Prostate gland (tissue), 2 donors: ENCODE measurements at regions of chrX and their contacts with region 1.

Region 1: GRCh38 chrX:9341291-9342201 is 123.3 kb upstream of the TBL1X start:
- DNase-seq: no peak
- H3K4me3 ChIP-seq: no peak overlapping the region
- H3K27ac ChIP-seq: peak overlapping the region; percentile 58 to 66
- H3K4me1 ChIP-seq: no peaks in the 10 kb centered on the region
- H3K27me3 ChIP-seq: no peaks in the 10 kb centered on the region
- CTCF ChIP-seq: no peak
- POLR2A ChIP-seq: no peak

Region 2: DNA sequence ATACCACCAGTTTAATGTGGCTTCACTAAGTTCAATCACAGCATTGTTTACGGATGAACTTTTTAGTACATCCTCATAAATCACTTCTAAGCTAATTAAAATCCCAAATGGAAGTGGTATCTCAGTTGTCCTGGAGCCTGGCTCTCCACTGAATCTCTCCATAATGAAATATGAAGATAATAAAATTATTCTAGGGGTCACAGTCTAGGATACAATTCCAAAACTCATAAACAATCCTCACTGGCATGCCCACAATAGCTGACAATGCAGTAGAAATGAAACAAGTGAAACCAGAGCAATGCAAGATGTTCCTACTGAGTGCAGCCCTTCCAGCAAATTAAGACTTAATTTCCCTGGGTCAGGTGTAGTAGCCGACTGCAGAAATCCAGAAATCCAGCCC is 260.3 kb before region 1 on chrX:
- intact Hi-C with region 1: loop called (anchors 5 kb)
- DNase-seq: no peak
- H3K4me3 ChIP-seq: no peak overlapping the region
- H3K27ac ChIP-seq: no peak overlapping the region
- H3K4me1 ChIP-seq: no peaks in the 10 kb centered on the region
- H3K27me3 ChIP-seq: no peaks in the 10 kb centered on the region
- CTCF ChIP-seq: no peak
- POLR2A ChIP-seq: no peak

Region 3: GRCh38 chrX:9148621-9149385 is 192.7 kb before region 1 on chrX:
- intact Hi-C with region 1: loop called (anchors 2 kb)
- DNase-seq: no peak
- H3K4me3 ChIP-seq: no peak overlapping the region
- H3K27ac ChIP-seq: no peak overlapping the region
- H3K4me1 ChIP-seq: no peaks in the 10 kb centered on the region
- H3K27me3 ChIP-seq: no peaks in the 10 kb centered on the region
- CTCF ChIP-seq: no peak
- POLR2A ChIP-seq: no peak

Region 4: GRCh38 chrX:9464435-9465371 is 123.2 kb after region 1 on chrX and contains the start of gene TBL1X:
- intact Hi-C with region 1: loop called (anchors 2 kb)
- DNase-seq: peak; percentile 31
- H3K4me3 ChIP-seq: peak within 1 kb of the TSS; percentile 51 to 53
- H3K27ac ChIP-seq: peak within 1 kb of the TSS; percentile 81 to 82
- H3K4me1 ChIP-seq: no peaks in the 10 kb centered on the region
- H3K27me3 ChIP-seq: no peaks in the 10 kb centered on the region
- CTCF ChIP-seq: no peak
- POLR2A ChIP-seq: peak; percentile 12
- total RNA-seq, gene TBL1X: 23.2 to 76.9 TPM

Region 5: GRCh38 chrX:9530848-9531274 is 189.3 kb after region 1 on chrX:
- intact Hi-C with region 1: loop called (anchors 10 kb)
- DNase-seq: peak; percentile 6
- H3K4me3 ChIP-seq: no peak overlapping the region
- H3K27ac ChIP-seq: no peak overlapping the region
- H3K4me1 ChIP-seq: no peaks in the 10 kb centered on the region
- H3K27me3 ChIP-seq: no peaks in the 10 kb centered on the region
- CTCF ChIP-seq: no peak
- POLR2A ChIP-seq: no peak

Region 6: GRCh38 chrX:9775930-9776329 is 434.4 kb after region 1 on chrX:
- intact Hi-C with region 1: no loop called
- DNase-seq: no peak
- H3K4me3 ChIP-seq: no peak overlapping the region
- H3K27ac ChIP-seq: no peak overlapping the region
- H3K4me1 ChIP-seq: no peaks in the 10 kb centered on the region
- H3K27me3 ChIP-seq: no peaks in the 10 kb centered on the region
- CTCF ChIP-seq: no peak
- POLR2A ChIP-seq: no peak